ENCODE measurements at regions of chr2 and their contacts with region 1.

Region 1: DNA sequence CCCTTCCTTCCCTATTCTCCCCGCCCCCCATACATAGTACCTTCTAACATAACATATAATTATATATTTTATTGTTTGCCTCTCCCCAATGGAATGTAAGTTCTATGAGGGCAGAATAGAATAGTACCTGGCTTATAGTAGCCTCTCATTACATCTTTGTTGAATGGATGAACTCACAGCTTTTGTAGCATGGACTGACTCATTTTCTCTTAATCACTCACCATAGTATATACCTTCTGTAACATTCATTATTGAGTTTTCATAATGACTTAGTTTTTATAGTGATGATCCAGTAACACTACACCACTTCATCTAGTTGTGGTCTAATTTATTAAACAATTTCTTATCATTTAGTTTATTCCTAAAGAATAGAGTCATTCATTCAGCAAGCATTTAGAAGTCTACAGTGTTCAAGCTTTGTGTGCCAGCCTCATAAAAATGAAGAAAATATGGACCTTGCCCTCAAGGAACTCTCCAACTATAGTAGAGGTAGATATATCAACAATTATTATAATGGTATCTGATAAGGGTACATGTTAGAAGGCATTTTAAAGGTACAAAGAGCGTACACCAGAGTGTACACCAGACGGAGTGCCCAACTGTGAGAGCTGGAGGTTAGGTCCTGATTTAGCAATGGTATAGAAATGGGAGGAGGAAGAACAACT is 31.1 kb downstream of the NCOA1 start:
- DNase-seq: no peak
- ATAC-seq: no peak
- H3K4me3 ChIP-seq: no peak overlapping the region
- H3K27ac ChIP-seq: no peak overlapping the region
- H3K4me1 ChIP-seq: no peaks in the 10 kb centered on the region
- H3K27me3 ChIP-seq: no peaks in the 10 kb centered on the region
- CTCF ChIP-seq: no peak
- POLR2A ChIP-seq: no peak
- RAD21 ChIP-seq: no peak

Region 2: DNA sequence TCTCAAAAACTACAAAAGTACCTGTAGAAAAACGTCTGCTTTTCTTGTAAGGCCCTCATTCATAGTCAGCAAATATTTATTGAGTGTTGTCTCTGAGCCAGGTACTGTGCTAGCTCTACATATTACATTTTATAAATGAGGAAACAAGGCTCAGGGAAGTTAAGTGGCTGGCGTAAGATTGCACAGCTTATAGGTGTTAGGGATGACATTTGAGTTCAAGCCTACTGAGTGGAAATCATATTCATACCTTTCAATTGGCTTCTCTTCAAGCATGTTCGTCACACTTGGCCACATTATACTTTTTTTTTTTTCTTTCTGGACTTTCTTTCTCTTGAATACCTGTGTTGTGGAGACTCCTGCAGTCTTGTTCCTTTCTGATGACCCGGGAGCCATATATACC is 25.1 kb before region 1 on chr2:
- CTCF ChIA-PET with region 1: interaction called, 10 read pairs
- POLR2A ChIA-PET with region 1: no interaction called
- dilution Hi-C with region 1: no loop called
- in situ Hi-C with region 1: no loop called
- intact Hi-C with region 1: no loop called
- DNase-seq: no peak
- ATAC-seq: no peak
- H3K4me3 ChIP-seq: no peak overlapping the region
- H3K27ac ChIP-seq: no peak overlapping the region
- H3K4me1 ChIP-seq: peaks cover 5% of the 10 kb centered on the region
- H3K27me3 ChIP-seq: no peaks in the 10 kb centered on the region
- CTCF ChIP-seq: no peak
- POLR2A ChIP-seq: no peak
- RAD21 ChIP-seq: no peak

Region 3: GRCh38 chr2:24571828-24572442 is 49.8 kb after region 1 on chr2:
- CTCF ChIA-PET with region 1: no interaction called
- POLR2A ChIA-PET with region 1: no interaction called
- dilution Hi-C with region 1: no loop called
- in situ Hi-C with region 1: no loop called
- intact Hi-C with region 1: loop called (anchors 5 kb)
- DNase-seq: no peak
- ATAC-seq: no peak
- H3K4me3 ChIP-seq: no peak overlapping the region
- H3K27ac ChIP-seq: no peak overlapping the region
- H3K4me1 ChIP-seq: no peaks in the 10 kb centered on the region
- H3K27me3 ChIP-seq: no peaks in the 10 kb centered on the region
- CTCF ChIP-seq: no peak
- POLR2A ChIP-seq: no peak
- RAD21 ChIP-seq: no peak

Measured in IMR-90 (cell line).